ENCODE measurements at regions of chr20 and their contacts with region 1.

Region 1: DNA sequence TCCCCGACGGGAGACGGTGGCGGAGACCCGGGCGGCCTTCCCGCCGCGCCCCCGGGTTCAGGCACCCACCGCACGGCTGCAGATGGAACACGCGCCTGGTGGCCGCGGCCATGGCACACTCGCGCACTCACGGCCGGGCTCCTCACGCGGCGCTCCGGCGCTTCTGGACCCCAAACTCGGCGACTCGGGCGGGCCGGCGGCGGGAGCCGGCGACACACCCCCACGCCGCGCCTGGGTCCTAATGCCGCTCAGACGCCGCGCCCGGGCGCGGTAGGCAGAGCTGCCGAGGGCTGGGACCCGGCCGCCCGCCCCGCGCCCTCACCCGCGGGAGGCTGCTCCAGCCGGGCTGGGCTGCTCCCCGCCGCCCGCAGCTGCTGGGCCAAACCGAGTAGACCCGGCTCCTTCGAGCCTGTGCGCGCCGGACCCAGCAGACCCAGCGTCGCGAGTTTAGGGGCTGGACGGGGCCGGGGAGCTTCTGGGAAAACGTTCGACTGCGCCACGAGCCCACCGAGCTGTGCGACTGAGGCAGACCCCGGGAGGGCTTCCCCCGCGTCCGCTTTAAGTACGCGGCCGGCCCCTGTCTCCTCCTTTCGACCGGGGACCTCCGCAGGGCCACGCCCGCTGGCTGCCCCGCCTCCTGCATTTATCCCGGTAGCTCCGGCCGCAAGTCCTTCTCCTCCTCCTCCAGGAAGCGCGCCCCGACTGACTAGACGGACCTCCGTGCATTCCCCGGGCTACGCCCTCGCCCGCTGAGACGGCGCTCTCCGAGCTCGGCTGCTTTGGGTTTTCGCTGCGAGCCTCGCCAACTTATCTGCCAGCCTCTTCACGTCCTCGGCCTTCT is at the start of gene SLC4A11:
- DNase-seq: peak; percentile 56
- ATAC-seq: peak; percentile 59
- H3K4me3 ChIP-seq: peak within 1 kb of the TSS; percentile 59 to 83 (median 83)
- H3K27ac ChIP-seq: no peak within 1 kb of the TSS
- H3K4me1 ChIP-seq: peaks cover 66% of the 10 kb centered on the region
- H3K27me3 ChIP-seq: peaks cover 6 to 40% of the 10 kb centered on the region in 2 experiments
- CTCF ChIP-seq: no peak
- EP300 ChIP-seq: no peak
- POLR2A ChIP-seq: no peak
- RAD21 ChIP-seq: peak; percentile 39; the same call in 1 of the 2 replicates
- total RNA-seq, gene SLC4A11: 1.1 and 3.9 TPM in 2 replicates

Region 2: DNA sequence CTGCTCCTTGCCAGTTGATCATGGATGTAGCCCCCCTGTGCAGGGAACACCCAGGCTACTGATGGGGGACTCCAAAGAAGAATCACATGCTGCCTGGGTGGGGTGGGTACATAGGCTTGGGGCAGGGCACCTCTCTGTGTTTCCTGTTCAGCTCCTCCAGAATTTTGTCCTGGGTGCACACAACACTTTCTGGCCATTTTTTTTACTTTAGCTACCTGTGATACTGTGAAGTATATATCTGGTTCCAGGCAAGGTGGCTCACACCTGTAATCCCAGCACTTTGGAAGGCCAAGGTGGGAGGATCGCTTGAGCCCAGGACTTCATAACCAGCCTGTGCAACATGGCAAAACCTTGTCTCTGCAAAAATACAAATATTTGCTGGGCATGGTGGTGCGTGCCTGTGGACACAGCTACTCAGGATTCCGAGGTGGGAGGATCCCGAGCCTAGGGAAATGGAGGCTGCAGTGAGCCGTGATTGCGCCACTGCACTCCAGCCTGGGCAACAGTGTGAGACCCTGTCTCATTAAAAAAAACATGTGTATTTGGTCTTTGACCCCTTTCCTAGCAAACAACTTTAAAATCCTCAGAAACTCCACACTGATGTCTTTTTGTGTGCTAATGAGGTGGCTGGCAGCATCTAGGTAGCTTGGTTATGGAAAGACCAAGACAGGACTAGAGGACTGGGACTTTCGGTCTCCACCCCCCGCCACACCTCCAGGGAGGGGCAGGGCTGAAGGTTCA is 14.4 kb before region 1 on chr20:
- CTCF ChIA-PET with region 1: no interaction called
- POLR2A ChIA-PET with region 1: interaction called, 26 read pairs
- in situ Hi-C with region 1: no loop called
- intact Hi-C with region 1: no loop called
- DNase-seq: peak; percentile 83
- ATAC-seq: peak; percentile 60
- H3K4me3 ChIP-seq: 0 out of 6 replicates have a peak overlapping the region, but pooled peaks of 1 of the 3 experiments have one; percentile 19
- H3K27ac ChIP-seq: peak overlapping the region; percentile 73
- H3K4me1 ChIP-seq: peaks cover 74% of the 10 kb centered on the region
- H3K27me3 ChIP-seq: no peaks in the 10 kb centered on the region
- CTCF ChIP-seq: peak; percentile 33; the same call in 1 of the 2 replicates
- EP300 ChIP-seq: peak in 1 of 2 experiments; percentile 70; a peak in 1 of 4 replicates
- POLR2A ChIP-seq: no peak; a peak in 1 of 4 replicates
- RAD21 ChIP-seq: no peak

Region 3: DNA sequence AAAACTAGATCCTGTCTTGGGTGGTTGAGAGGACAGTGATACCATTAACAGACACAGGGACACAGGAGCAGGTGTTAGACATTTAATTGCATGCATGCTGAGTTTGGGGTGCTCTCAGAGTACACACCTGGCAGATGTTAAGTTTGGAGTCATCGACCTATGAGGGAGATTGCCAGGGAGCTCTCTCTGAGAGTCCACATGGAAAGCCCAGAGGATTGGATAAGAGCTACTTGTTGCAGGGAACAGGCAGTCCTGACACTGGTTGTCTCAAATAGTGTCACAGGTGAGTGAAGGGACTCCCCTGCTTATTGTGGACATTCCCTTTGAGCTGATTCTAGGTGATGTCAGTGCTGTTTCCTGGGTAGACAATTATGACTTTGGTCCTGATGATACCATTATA is 234.7 kb after region 1 on chr20:
- CTCF ChIA-PET with region 1: no interaction called
- POLR2A ChIA-PET with region 1: no interaction called
- in situ Hi-C with region 1: no loop called
- intact Hi-C with region 1: no loop called
- DNase-seq: no peak
- ATAC-seq: no peak
- H3K4me3 ChIP-seq: no peak overlapping the region
- H3K27ac ChIP-seq: no peak overlapping the region
- H3K4me1 ChIP-seq: peaks cover 60% of the 10 kb centered on the region
- H3K27me3 ChIP-seq: peaks cover 0 to 4% of the 10 kb centered on the region in 2 experiments; a peak in 1 of 5 replicates
- CTCF ChIP-seq: no peak
- EP300 ChIP-seq: no peak
- POLR2A ChIP-seq: no peak
- RAD21 ChIP-seq: no peak